H1 (cell line): ENCODE measurements at regions of chr7 and their contacts with region 1.

Region 1: GRCh38 chr7:30504347-30505173 is at the start of gene GGCT:
- DNase-seq: peak; percentile 94 to 95
- H3K4me3 ChIP-seq: peak within 1 kb of the TSS; percentile 85 to 95 (median 90)
- H3K27ac ChIP-seq: peak within 1 kb of the TSS; percentile 86
- H3K4me1 ChIP-seq: peaks cover 0 to 6% (median 3%) of the 10 kb centered on the region in 4 experiments; a peak in 4 of 7 replicates
- H3K27me3 ChIP-seq: no peaks in the 10 kb centered on the region
- CTCF ChIP-seq: no peak
- EP300 ChIP-seq: no peak
- POLR2A ChIP-seq: peak; percentile 88 to 93
- RAD21 ChIP-seq: no peak
- total RNA-seq, gene GGCT: 125 and 129 TPM in 2 replicates

Region 2: DNA sequence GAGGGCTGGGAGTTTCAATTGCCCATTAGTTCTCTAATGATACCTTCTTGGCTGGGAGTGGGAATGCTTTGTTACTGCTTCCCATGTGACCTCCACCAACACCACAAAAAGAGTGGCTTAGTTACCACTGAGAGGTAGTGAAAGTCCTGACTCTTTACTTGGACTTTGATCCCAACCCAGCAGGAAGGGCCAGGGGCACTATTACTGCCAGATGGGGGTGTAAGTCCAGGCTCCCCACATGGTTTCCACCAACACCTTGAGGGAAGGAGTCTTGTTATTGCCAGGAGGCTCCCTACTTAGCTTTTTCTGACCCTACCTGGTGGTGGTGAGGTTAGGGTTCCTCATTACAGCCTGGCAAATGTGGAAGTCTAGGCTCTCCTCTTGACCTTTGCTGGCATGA is 11.3 kb before region 1 on chr7:
- CTCF ChIA-PET with region 1: interaction called, 3 read pairs
- POLR2A ChIA-PET with region 1: interaction called, 14 read pairs
- DNase-seq: no peak
- H3K4me3 ChIP-seq: no peak overlapping the region
- H3K27ac ChIP-seq: no peak overlapping the region
- H3K4me1 ChIP-seq: no peaks in the 10 kb centered on the region
- H3K27me3 ChIP-seq: no peaks in the 10 kb centered on the region
- CTCF ChIP-seq: no peak
- EP300 ChIP-seq: no peak
- POLR2A ChIP-seq: no peak
- RAD21 ChIP-seq: no peak